GM13977 (cell line): ENCODE measurements at regions of chr3 and their contacts with region 1.

Region 1: GRCh38 chr3:120795017-120795648 is 52.6 kb downstream of the GTF2E1 start:
- DNase-seq: peak; percentile 31
- CTCF ChIP-seq: peak; percentile 86

Region 2: DNA sequence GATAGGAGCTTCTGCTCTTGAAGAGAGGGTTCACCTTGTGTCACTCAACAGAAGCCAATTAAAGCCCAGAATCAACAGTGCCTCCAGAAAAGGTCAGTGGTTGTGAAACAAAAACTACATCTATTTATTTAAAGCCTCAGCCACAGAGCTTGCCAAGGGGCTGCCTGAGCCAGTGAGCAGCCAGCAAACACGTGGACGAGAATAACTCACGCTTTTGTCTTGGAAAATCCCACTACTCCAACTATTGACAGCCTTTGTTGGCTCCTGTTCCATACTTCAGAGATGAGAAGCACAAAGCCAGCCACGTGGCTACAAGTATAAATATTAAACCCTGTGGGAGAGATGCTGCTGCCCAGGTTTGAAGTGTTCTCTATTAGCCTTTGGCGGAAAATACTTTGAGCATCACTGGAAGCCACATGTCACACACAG is 520.4 kb before region 1 on chr3:
- in situ Hi-C with region 1: loop called (anchors 25 kb)
- DNase-seq: no peak
- CTCF ChIP-seq: no peak

Region 3: DNA sequence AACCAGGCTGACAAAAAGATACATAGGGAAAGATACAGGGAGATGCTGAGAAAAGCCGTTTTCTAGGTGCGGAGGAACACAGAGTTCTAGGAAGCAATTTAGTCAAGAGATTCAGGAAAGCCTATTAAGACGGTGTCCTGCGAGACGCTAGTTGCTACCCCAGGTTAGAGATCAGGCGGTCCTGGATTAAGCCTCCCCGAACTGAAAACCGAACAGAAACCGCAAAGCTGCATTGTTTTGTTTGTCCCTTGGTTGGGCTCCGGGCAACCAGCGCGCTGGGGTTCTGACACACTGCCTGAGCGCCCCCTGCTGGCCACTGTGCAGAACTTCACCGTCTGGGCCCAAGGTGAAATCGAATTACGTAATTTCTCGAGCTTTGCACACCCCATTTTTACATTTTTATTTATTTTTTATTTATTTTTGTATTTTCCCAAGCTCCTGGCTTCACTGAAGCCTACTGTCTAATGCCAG is 236.3 kb before region 1 on chr3:
- in situ Hi-C with region 1: loop called (anchors 10 kb)
- DNase-seq: peak; percentile 75
- CTCF ChIP-seq: peak; percentile 95

Region 4: GRCh38 chr3:120604784-120605183 is 190.3 kb before region 1 on chr3:
- in situ Hi-C with region 1: no loop called
- DNase-seq: no peak
- CTCF ChIP-seq: no peak